ENCODE measurements at regions of chr5 and their contacts with region 1.

Region 1: GRCh38 chr5:36787365-36788093 is 89.0 kb upstream of the NIPBL start:
- DNase-seq: no peak
- ATAC-seq: no peak
- H3K4me3 ChIP-seq: no peak overlapping the region
- H3K27ac ChIP-seq: no peak overlapping the region
- H3K4me1 ChIP-seq: no peaks in the 10 kb centered on the region
- H3K27me3 ChIP-seq: no peaks in the 10 kb centered on the region
- CTCF ChIP-seq: no peak
- POLR2A ChIP-seq: no peak

Region 2: DNA sequence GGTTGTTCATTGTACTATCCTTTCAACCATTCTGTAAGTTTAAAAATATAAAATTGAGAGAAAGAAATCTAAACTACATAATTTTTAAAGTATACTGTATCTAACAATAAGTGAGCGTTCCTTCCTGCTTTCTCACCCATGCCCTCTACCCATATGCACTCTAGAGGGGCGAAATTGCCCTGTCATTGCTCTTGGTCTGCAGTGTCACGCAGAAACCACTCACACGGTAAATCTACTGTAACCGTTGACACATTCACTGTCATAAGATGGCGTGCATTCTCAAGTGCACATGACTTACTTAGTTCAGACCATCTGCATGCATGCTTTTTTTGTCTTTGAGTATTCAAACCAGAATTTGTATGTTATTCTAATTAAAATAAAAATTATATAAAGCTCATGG is 33.4 kb after region 1 on chr5:
- intact Hi-C with region 1: loop called in 1 of 10 experiments (anchors 5 kb)
- DNase-seq: no peak
- ATAC-seq: no peak
- H3K4me3 ChIP-seq: no peak overlapping the region
- H3K27ac ChIP-seq: no peak overlapping the region
- H3K4me1 ChIP-seq: no peaks in the 10 kb centered on the region
- H3K27me3 ChIP-seq: peaks cover 0 to 3% (median 0%) of the 10 kb centered on the region in 9 donors
- CTCF ChIP-seq: no peak
- POLR2A ChIP-seq: no peak

Measured in heart left ventricle (tissue), 16 donors.